GM12878 (cell line): ENCODE measurements at regions of chrX and their contacts with region 1.

Region 1: DNA sequence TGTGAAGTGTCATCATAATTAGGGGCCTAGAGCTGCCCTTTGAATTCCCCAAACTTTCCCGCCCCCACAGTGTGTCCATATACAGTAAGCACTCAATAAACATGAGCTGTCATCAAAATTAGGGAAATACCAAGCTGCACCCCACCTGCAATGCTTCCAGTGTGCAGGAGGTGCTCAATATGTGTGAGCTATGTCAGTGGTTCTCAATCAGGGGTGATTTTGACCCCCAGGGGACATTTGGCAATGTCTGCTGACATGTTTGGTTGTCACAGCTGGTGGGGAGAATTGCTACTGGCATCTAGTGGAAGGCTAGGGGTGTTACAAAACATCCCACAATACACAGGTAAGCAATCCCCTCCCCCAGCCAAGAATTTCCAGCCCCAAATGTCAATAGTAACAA is 750 bp downstream of the CFP start:
- DNase-seq: no peak
- ATAC-seq: peak; percentile 67
- H3K4me3 ChIP-seq: no peak overlapping the region
- H3K27ac ChIP-seq: peak overlapping the region; percentile 9; the same call in 1 of the 2 replicates
- H3K4me1 ChIP-seq: peaks cover 23% of the 10 kb centered on the region
- H3K27me3 ChIP-seq: no peaks in the 10 kb centered on the region
- CTCF ChIP-seq: peak; percentile 34 to 54 (median 36); a peak in 5 of 6 replicates
- EP300 ChIP-seq: no peak
- POLR2A ChIP-seq: no peak
- RAD21 ChIP-seq: peak; percentile 64

Region 2: DNA sequence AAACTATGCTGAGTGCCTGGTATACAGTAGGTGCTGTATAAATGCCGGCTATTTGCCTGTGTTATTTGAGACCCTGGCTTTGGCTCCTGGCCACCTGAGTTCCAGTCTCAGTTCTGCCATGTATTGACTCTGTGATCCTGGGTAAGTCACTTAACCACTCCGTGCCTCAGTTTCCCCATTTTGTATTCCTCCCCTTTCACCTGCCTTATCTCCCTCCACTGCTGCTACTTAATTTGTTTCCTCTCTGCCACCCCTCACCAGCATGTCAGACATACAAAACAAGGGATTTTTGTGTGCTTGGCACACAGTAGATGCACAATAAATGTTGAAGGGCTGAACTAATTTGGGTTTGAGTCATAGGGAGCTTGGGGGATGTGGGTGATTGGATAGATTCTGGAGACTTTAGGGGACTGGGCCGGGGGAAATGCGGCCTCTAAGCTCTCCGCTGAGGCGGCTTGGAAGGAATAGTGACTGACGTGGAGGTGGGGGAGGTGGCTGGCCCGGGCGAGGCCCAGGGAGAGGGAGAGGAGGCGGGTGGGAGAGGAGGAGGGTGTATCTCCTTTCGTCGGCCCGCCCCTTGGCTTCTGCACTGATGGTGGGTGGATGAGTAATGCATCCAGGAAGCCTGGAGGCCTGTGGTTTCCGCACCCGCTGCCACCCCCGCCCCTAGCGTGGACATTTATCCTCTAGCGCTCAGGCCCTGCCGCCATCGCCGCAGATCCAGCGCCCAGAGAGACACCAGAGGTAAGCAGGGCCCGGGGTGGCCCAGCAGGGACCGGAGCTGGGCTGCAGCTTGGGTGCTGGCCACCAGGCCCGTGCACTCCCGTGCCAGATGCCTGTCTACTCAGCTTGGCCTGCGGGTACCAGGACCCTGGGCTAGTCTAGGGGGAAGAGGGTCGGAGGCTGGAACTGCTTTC is 47.0 kb before region 1 on chrX and contains the start of gene TIMP1:
- CTCF ChIA-PET with region 1: interaction called, 7 read pairs
- POLR2A ChIA-PET with region 1: interaction called, 3 read pairs
- RAD21 ChIA-PET with region 1: interaction called, 6 read pairs
- SMC1A ChIA-PET with region 1: interaction called, 7 read pairs
- in situ Hi-C with region 1: no loop called
- intact Hi-C with region 1: loop called (anchors 5 kb)
- DNase-seq: peak; percentile 45
- ATAC-seq: peak; percentile 91
- H3K4me3 ChIP-seq: peak within 1 kb of the TSS; percentile 67
- H3K27ac ChIP-seq: peak within 1 kb of the TSS; percentile 58
- H3K4me1 ChIP-seq: peaks cover 8% of the 10 kb centered on the region
- H3K27me3 ChIP-seq: no peaks in the 10 kb centered on the region
- CTCF ChIP-seq: no peak
- EP300 ChIP-seq: no peak
- POLR2A ChIP-seq: peak; percentile 80
- RAD21 ChIP-seq: no peak
- polyA plus RNA-seq, gene TIMP1: 312 to 341 TPM

Region 3: GRCh38 chrX:47644557-47645091 is 15.6 kb after region 1 on chrX:
- CTCF ChIA-PET with region 1: interaction called, 16 read pairs
- POLR2A ChIA-PET with region 1: interaction called, 6 read pairs
- RAD21 ChIA-PET with region 1: interaction called, 10 read pairs
- SMC1A ChIA-PET with region 1: interaction called, 4 read pairs
- in situ Hi-C with region 1: no loop called
- intact Hi-C with region 1: no loop called
- DNase-seq: no peak
- ATAC-seq: peak; percentile 90
- H3K4me3 ChIP-seq: no peak overlapping the region
- H3K27ac ChIP-seq: no peak overlapping the region
- H3K4me1 ChIP-seq: no peaks in the 10 kb centered on the region; the same call in 1 of the 2 replicates
- H3K27me3 ChIP-seq: no peaks in the 10 kb centered on the region
- CTCF ChIP-seq: peak; percentile 39 to 59 (median 51); a peak in 4 of 6 replicates
- EP300 ChIP-seq: no peak
- POLR2A ChIP-seq: no peak
- RAD21 ChIP-seq: peak; percentile 19; the same call in 1 of the 2 replicates

Region 4: GRCh38 chrX:47650164-47651042 is 21.4 kb after region 1 on chrX and contains the start of gene ELK1:
- CTCF ChIA-PET with region 1: interaction called, 12 read pairs
- POLR2A ChIA-PET with region 1: interaction called, 5 read pairs
- RAD21 ChIA-PET with region 1: interaction called, 10 read pairs
- SMC1A ChIA-PET with region 1: interaction called, 4 read pairs
- in situ Hi-C with region 1: no loop called
- intact Hi-C with region 1: no loop called
- DNase-seq: peak; percentile 90
- ATAC-seq: peak; percentile 94
- H3K4me3 ChIP-seq: peak within 1 kb of the TSS; percentile 75
- H3K27ac ChIP-seq: peak within 1 kb of the TSS; percentile 76
- H3K4me1 ChIP-seq: peaks cover 2% of the 10 kb centered on the region; the same call in 1 of the 2 replicates
- H3K27me3 ChIP-seq: no peaks in the 10 kb centered on the region
- CTCF ChIP-seq: no peak
- EP300 ChIP-seq: no peak
- POLR2A ChIP-seq: peak; percentile 87
- RAD21 ChIP-seq: no peak
- polyA plus RNA-seq, gene ELK1: 4.1 to 6.3 TPM

Region 5: DNA sequence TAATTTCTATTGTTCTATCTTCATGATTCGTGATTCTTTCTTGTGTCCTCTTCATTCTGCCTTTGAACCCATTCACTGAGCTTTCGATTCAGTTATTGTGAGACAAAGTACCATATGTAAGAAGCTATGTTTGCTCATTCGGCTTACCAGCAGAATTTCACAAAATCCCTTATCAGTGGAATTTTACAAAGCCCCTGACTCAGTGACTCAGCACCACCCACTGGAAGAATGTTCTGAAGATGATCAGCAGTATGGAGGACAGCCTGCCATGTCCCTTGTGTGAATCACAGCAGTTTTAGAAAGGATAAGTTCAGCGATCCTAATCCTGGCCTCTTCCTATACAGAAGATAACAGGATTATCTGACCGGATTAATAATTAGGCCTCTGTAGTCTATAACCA is 35.8 kb after region 1 on chrX:
- CTCF ChIA-PET with region 1: no interaction called
- POLR2A ChIA-PET with region 1: no interaction called
- RAD21 ChIA-PET with region 1: no interaction called
- SMC1A ChIA-PET with region 1: no interaction called
- in situ Hi-C with region 1: no loop called
- intact Hi-C with region 1: no loop called
- DNase-seq: no peak
- ATAC-seq: no peak
- H3K4me3 ChIP-seq: no peak overlapping the region
- H3K27ac ChIP-seq: no peak overlapping the region
- H3K4me1 ChIP-seq: no peaks in the 10 kb centered on the region
- H3K27me3 ChIP-seq: no peaks in the 10 kb centered on the region
- CTCF ChIP-seq: no peak
- EP300 ChIP-seq: no peak
- POLR2A ChIP-seq: no peak
- RAD21 ChIP-seq: no peak